Sigmoid colon (tissue), 7 donors: ENCODE measurements at regions of chr15 and their contacts with region 1.

Region 1: DNA sequence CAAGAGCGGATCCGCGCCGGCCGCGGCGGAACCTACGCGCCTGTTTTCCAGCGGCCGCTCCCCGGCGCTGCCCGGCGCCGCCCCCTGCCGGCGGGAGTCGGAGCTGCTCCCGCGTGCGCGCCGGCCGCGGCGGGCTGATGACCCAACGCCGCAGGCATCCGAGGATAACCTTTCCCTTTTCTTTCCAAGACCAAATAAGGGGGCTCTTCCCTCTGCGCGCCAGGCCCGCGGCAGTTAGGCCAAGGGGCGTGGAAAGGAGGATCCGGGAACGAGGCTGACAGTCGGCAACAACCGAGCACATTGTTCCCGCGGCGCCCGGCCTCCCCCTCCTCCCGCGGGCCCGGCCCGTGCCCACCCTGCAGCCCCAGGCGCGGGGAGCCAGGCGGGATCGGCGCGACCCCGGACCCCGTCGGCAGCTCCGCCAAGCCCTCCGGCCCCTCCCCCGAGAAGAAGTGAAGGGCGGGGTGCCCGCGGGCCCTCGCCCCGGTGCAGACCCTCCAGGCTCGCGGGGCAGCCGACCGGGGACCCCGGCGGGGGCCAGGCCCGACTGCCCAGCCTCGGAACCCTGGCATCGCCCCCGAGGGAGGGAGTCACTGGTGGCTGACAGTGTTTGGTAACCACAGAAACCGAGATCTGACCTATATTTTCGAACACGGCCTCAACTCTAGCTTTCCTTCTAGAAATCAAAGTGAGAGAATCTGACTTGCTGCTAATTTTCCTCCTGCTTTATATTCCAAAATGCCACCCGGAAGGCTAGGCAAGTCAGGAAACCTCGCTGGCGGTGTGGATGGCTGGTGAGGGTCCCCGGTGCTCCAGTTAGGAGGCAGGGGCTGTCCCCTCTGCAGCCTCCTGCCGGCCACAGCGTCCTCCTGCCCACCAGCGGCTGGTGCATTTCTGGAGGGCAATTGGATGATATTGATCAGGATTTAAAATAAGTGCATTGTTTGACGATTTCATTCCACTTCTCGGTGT is 45.6 kb upstream of the SYNM start:
- DNase-seq: peak; percentile 96
- H3K4me3 ChIP-seq: peak overlapping the region; percentile 28 to 65 (median 57)
- H3K27ac ChIP-seq: peak overlapping the region; percentile 91 to 97 (median 94)
- H3K4me1 ChIP-seq: peaks cover 0 to 21% (median 18%) of the 10 kb centered on the region in 4 donors
- H3K27me3 ChIP-seq: no peaks in the 10 kb centered on the region
- CTCF ChIP-seq: peak in 3 of 4 experiments; percentile 10 to 76 (median 26)
- EP300 ChIP-seq: peak in 1 of 4 donors; percentile 62
- POLR2A ChIP-seq: no peak

Region 2: GRCh38 chr15:98779463-98780071 is 279.7 kb before region 1 on chr15:
- intact Hi-C with region 1: loop called (anchors 5 kb)
- DNase-seq: peak; percentile 86
- H3K4me3 ChIP-seq: no peak overlapping the region
- H3K27ac ChIP-seq: peak overlapping the region in 3 of 4 donors; percentile 16 to 58 (median 44)
- H3K4me1 ChIP-seq: peaks cover 0 to 47% (median 39%) of the 10 kb centered on the region in 4 donors
- H3K27me3 ChIP-seq: no peaks in the 10 kb centered on the region
- CTCF ChIP-seq: peak; percentile 49 to 90 (median 88)
- EP300 ChIP-seq: no peak
- POLR2A ChIP-seq: no peak

Region 3: DNA sequence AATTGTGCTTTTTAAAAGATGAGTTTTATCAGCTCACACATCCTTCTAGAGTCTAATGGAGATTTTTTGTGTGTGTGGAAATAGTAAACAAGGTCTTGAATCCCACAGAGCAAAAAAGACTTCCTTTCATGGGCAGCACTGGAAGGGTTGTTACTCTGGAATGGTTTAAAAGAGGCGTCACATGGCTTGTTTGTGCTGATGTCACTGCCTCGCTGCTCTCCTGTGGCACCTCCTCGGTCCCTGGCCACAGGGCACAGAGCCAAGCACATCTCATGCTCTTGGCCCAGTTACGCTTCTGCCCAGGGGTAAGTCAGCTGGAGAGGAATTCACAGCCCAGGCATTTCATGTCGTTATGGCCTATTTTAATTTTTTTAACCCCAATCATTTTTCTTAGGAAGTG is 104.9 kb before region 1 on chr15:
- intact Hi-C with region 1: loop called (anchors 2 kb)
- DNase-seq: peak; percentile 96
- H3K4me3 ChIP-seq: no peak overlapping the region
- H3K27ac ChIP-seq: peak overlapping the region; percentile 80 to 92 (median 84)
- H3K4me1 ChIP-seq: peaks cover 0 to 57% (median 49%) of the 10 kb centered on the region in 4 donors
- H3K27me3 ChIP-seq: no peaks in the 10 kb centered on the region
- CTCF ChIP-seq: no peak
- EP300 ChIP-seq: peak in 3 of 4 donors; percentile 62 to 98 (median 68)
- POLR2A ChIP-seq: no peak

Region 4: GRCh38 chr15:99014803-99015676 is 44.3 kb before region 1 on chr15:
- intact Hi-C with region 1: loop called (anchors 5 kb)
- DNase-seq: peak; percentile 80
- H3K4me3 ChIP-seq: peak overlapping the region; percentile 32 to 70 (median 59)
- H3K27ac ChIP-seq: peak overlapping the region; percentile 31 to 71 (median 53)
- H3K4me1 ChIP-seq: peaks cover 0 to 11% (median 10%) of the 10 kb centered on the region in 4 donors
- H3K27me3 ChIP-seq: no peaks in the 10 kb centered on the region
- CTCF ChIP-seq: no peak
- EP300 ChIP-seq: no peak
- POLR2A ChIP-seq: no peak